Activated naive CD8-positive, alpha-beta T cell treated with anti-CD3 and anti-CD28 coated beads, Interleukin-2, amount 10 ng/mL, durations not matched to agents 7 days and 5 days (primary cell): ENCODE measurements at regions of chr1 and their contacts with region 1.

Region 1: GRCh38 chr1:205199090-205199930 is 12.2 kb downstream of the DSTYK start:
- DNase-seq: no peak
- ATAC-seq: peak; percentile 76
- H3K4me3 Mint-ChIP-seq: peak overlapping the region; percentile 67
- H3K27ac Mint-ChIP-seq: peak overlapping the region; percentile 72
- H3K4me1 Mint-ChIP-seq: peaks cover 45% of the 10 kb centered on the region
- H3K27me3 Mint-ChIP-seq: no peaks in the 10 kb centered on the region

Region 2: DNA sequence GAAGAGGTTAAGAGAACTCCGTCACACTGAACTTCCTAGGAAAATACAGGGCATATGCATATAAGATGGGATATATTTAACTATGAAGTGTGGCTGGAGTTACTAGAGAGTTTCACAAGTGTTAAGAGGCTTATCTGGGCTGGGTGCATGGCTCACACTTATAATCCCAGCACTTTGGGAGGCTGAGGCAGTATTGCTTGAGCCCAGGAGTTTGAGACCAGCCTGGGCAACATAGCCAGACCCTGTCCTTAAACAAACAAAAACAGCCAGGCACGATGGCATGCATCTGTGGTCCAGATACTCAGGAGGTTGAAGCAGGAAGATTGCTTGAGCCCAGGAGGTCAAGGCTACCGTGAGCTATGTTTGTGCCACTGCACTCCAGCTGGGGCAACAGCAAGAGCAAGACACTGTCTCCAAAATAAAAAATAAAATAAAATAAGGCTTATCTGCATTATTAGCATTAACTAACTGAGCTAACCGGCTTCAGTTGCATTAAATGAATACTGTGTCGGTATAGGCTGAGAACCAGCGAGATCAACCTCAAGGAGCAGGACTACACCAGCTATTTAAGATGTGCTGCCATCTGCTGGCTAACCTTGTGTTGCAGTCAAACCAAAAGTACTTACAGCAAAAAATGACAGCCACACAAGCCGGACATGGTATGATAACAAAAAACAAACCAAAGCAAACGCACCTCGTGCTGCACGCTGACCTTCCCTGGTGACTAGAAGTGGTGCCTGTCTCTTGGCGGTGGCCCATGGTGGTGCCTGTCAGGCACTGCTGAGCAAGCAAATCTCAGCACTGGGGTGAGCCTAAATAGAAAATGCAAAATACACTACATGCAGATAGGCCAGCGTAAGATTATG is 57.8 kb before region 1 on chr1:
- POLR2A ChIA-PET with region 1: no interaction called
- DNase-seq: peak; percentile 68
- ATAC-seq: peak; percentile 89
- H3K4me3 Mint-ChIP-seq: peak overlapping the region; percentile 53
- H3K27ac Mint-ChIP-seq: peak overlapping the region; percentile 49
- H3K4me1 Mint-ChIP-seq: peaks cover 9% of the 10 kb centered on the region
- H3K27me3 Mint-ChIP-seq: no peaks in the 10 kb centered on the region

Region 3: DNA sequence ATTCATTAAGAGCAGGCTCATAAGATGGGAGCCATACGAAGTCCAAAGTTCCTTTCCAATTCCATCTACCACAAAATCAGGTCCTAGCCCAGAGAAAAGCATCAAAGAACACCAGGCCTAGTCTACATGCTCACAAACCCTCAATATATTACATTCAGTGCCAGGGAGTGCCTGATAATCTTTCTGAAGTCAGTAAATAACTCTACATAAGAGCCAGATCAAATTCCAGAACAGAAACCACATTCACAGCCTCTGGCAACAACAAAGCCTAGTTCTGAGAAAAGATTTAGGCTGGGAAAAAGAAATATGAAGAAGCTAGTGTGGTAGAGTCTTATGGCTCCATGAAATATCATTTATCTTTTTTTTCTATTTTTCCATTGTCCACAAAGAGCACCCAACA is 37.0 kb before region 1 on chr1:
- POLR2A ChIA-PET with region 1: no interaction called
- DNase-seq: no peak
- ATAC-seq: no peak
- H3K4me3 Mint-ChIP-seq: no peak overlapping the region
- H3K27ac Mint-ChIP-seq: no peak overlapping the region
- H3K4me1 Mint-ChIP-seq: peaks cover 16% of the 10 kb centered on the region
- H3K27me3 Mint-ChIP-seq: no peaks in the 10 kb centered on the region

Region 4: GRCh38 chr1:205183676-205184335 is 15.5 kb before region 1 on chr1:
- POLR2A ChIA-PET with region 1: interaction called, 10 read pairs
- DNase-seq: no peak
- ATAC-seq: peak; percentile 58
- H3K4me3 Mint-ChIP-seq: peak overlapping the region; percentile 57
- H3K27ac Mint-ChIP-seq: peak overlapping the region; percentile 80
- H3K4me1 Mint-ChIP-seq: peaks cover 58% of the 10 kb centered on the region
- H3K27me3 Mint-ChIP-seq: no peaks in the 10 kb centered on the region

Region 5: GRCh38 chr1:205217418-205217817 is 18.1 kb after region 1 on chr1:
- POLR2A ChIA-PET with region 1: no interaction called
- DNase-seq: no peak
- ATAC-seq: no peak
- H3K4me3 Mint-ChIP-seq: no peak overlapping the region
- H3K27ac Mint-ChIP-seq: no peak overlapping the region
- H3K4me1 Mint-ChIP-seq: peaks cover 16% of the 10 kb centered on the region
- H3K27me3 Mint-ChIP-seq: peaks cover 7% of the 10 kb centered on the region